MCF 10A (cell line): ENCODE measurements at regions of chr14 and their contacts with region 1.

Region 1: GRCh38 chr14:66495218-66496098 is 9.3 kb downstream of the CCDC196 start:
- DNase-seq: peak; percentile 69
- H3K4me3 Mint-ChIP-seq: no peak overlapping the region
- H3K27ac Mint-ChIP-seq: no peak overlapping the region
- H3K4me1 Mint-ChIP-seq: no peaks in the 10 kb centered on the region
- H3K27me3 Mint-ChIP-seq: no peaks in the 10 kb centered on the region
- CTCF ChIP-seq: peak; percentile 58

Region 2: DNA sequence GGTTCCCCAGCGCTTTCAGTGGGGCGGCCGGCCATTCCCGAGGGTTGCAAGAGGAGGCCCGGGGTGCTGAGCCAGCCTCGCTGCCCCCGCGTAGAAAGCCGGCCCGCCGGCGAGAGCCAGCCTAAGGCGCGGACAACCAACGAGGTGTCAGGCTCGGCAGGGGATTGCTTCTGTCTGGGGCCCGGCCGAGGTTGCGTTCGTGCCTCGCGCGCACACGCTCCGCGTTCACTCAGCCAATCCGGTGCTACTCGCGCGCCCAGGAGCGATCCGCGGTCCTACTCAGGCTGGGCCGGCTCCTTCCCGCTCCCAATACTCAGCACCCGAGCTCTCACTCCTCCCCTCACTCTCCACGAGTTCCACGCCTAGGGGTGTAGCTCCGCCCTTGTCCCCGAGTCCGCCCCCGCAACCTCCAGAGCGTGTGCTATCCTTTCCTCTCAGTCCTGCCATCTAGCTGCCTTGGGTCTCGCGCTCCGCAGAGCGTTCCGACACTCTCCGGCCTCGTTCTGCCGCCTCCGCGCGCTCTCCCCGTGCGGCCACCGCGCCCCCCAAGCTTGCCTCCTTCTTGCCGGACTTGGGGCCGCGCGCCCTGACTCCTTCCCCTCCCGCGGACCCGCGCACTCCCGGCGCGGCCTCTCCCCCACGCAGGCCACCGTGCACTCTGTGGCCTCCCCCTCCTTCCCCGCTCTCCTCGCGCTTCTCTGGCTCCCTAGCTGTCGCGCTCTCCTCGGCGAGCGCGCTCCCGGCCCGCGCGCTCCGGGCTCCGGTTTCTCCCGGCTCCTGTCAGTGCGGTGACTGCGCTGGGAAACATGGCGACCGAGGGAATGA is 12.5 kb after region 1 on chr14 and contains the start of gene GPHN:
- CTCF ChIA-PET with region 1: interaction called, 14 read pairs
- POLR2A ChIA-PET with region 1: interaction called, 30 read pairs
- intact Hi-C with region 1: loop called (anchors 1 kb)
- DNase-seq: peak; percentile 99
- H3K4me3 Mint-ChIP-seq: peak within 1 kb of the TSS; percentile 78
- H3K27ac Mint-ChIP-seq: peak within 1 kb of the TSS; percentile 88
- H3K4me1 Mint-ChIP-seq: peaks cover 20% of the 10 kb centered on the region
- H3K27me3 Mint-ChIP-seq: no peaks in the 10 kb centered on the region
- CTCF ChIP-seq: peak; percentile 21
- total RNA-seq, gene GPHN: 26.8 and 33.0 TPM in 2 replicates

Region 3: GRCh38 chr14:66568220-66568619 is 72.8 kb after region 1 on chr14:
- CTCF ChIA-PET with region 1: interaction called, 9 read pairs
- POLR2A ChIA-PET with region 1: no interaction called
- intact Hi-C with region 1: loop called (anchors 1 kb)
- DNase-seq: no peak
- H3K4me3 Mint-ChIP-seq: no peak overlapping the region
- H3K27ac Mint-ChIP-seq: no peak overlapping the region
- H3K4me1 Mint-ChIP-seq: peaks cover 5% of the 10 kb centered on the region
- H3K27me3 Mint-ChIP-seq: no peaks in the 10 kb centered on the region
- CTCF ChIP-seq: no peak

Region 4: GRCh38 chr14:67111022-67111421 is 615.6 kb after region 1 on chr14:
- CTCF ChIA-PET with region 1: no interaction called
- POLR2A ChIA-PET with region 1: no interaction called
- intact Hi-C with region 1: loop called (anchors 5 kb)
- DNase-seq: no peak
- H3K4me3 Mint-ChIP-seq: no peak overlapping the region
- H3K27ac Mint-ChIP-seq: no peak overlapping the region
- H3K4me1 Mint-ChIP-seq: no peaks in the 10 kb centered on the region
- H3K27me3 Mint-ChIP-seq: no peaks in the 10 kb centered on the region
- CTCF ChIP-seq: no peak